ENCODE measurements at regions of chr3 and their contacts with region 1.

Region 1: DNA sequence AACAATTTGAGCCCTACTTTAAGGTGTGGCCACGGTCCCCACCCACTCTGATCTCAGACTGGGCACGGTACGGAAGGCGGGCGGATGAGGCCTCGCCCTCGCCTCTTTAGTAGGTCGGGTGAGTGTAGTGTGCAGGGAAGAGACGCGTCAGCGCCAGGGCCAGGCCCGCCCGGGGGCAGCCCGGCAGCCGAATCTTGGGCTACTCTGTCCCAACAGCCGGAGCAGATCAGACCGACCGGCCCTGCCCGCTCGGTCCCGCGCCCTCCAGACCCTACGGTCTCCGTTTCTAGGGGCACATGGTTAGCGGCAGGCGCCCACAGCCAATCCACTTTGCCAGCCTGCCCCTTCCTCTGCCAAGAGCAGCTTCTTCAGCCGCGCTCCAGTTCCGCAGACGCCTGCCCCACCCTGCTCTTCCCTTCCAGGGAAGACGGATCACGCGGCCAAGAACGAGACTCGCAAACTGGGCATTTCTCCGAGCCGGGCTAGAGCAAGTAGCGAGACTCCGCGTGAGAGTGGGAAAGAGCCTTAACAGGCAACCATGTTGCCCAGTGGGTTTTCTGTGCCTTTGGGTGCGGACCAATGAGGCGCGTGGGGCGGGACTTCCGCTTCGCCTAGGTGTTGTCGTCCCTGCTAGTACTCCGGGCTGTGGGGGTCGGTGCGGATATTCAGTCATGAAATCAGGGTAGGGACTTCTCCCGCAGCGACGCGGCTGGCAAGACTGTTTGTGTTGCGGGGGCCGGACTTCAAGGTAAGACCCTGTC is at the start of gene RNF13:
- DNase-seq: peak; percentile 80 to 94 (median 92)
- ATAC-seq: peak; percentile 96
- H3K4me3 ChIP-seq: peak within 1 kb of the TSS; percentile 95
- H3K4me3 Mint-ChIP-seq: peak within 1 kb of the TSS; percentile 96 to 100 (median 99)
- H3K27ac ChIP-seq: peak within 1 kb of the TSS; percentile 94
- H3K27ac Mint-ChIP-seq: peak within 1 kb of the TSS; percentile 97 to 100 (median 99)
- H3K4me1 ChIP-seq: peaks cover 16 to 34% of the 10 kb centered on the region in 2 donors
- H3K4me1 Mint-ChIP-seq: peaks cover 39 to 54% (median 47%) of the 10 kb centered on the region in 7 donors
- H3K27me3 ChIP-seq: no peaks in the 10 kb centered on the region
- H3K27me3 Mint-ChIP-seq: peaks cover 0 to 14% (median 4%) of the 10 kb centered on the region in 5 donors
- total RNA-seq, gene RNF13: 41.2 to 68.5 (median 66.1) TPM

Region 2: GRCh38 chr3:148991194-148992026 is 821.4 kb before region 1 on chr3 and contains the start of gene GYG1:
- CTCF ChIA-PET with region 1: no interaction called
- POLR2A ChIA-PET with region 1: no interaction called
- intact Hi-C with region 1: loop called (anchors 2 kb)
- DNase-seq: peak; percentile 56 to 78 (median 70)
- ATAC-seq: peak; percentile 91
- H3K4me3 ChIP-seq: peak within 1 kb of the TSS; percentile 77
- H3K4me3 Mint-ChIP-seq: peak within 1 kb of the TSS; percentile 70 to 91 (median 87)
- H3K27ac ChIP-seq: peak within 1 kb of the TSS; percentile 76
- H3K27ac Mint-ChIP-seq: peak within 1 kb of the TSS; percentile 41 to 87 (median 80)
- H3K4me1 ChIP-seq: peaks cover 8 to 16% of the 10 kb centered on the region in 2 donors
- H3K4me1 Mint-ChIP-seq: peaks cover 5 to 41% (median 28%) of the 10 kb centered on the region in 7 donors
- H3K27me3 ChIP-seq: no peaks in the 10 kb centered on the region
- H3K27me3 Mint-ChIP-seq: peaks cover 0 to 3% (median 0%) of the 10 kb centered on the region in 5 donors
- total RNA-seq, gene GYG1: 15.5 to 39.3 (median 16.2) TPM

Region 3: DNA sequence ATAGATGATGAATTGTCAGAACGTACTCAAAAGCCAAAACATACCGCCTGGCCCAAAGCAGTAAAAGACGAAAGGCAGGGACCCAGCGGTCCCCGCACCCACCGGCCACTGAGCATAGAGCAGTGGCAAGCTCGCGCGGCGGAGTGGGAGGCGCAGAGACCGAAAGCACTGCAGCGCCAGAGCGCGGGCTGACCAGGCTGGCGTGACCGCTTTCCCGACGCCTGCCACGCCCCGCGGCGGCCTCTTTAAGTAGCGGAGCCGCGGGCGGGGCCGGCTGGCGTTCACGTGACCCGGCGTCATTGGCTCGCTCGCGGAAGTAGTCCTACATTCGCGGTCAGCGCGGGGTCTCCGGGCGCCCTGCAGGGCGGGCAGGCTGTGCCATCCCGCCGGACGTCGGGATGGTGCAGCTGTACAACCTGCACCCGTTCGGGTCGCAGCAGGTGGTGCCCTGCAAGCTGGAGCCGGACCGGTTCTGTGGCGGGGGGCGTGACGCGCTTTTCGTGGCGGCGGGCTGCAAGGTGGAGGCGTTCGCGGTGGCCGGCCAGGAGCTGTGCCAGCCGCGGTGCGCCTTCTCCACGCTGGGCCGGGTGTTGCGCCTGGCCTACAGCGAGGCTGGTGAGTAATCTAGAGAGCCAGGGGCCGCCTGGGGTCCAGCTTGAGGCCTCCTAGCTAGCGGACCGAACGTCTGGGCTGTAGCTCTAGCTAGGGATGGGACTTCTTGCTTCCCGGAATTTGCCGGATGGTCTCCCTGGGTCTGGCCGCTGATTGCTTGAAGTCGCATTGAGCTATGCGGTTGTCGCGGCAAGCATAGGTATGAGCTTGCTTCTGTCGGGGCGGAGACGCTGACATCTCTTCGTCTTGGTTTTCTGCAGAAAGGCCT is 683.2 kb before region 1 on chr3 and contains the start of gene HPS3:
- CTCF ChIA-PET with region 1: no interaction called
- POLR2A ChIA-PET with region 1: no interaction called
- intact Hi-C with region 1: loop called (anchors 2 kb)
- DNase-seq: peak; percentile 62 to 87 (median 71)
- ATAC-seq: peak; percentile 94
- H3K4me3 ChIP-seq: peak within 1 kb of the TSS; percentile 96
- H3K4me3 Mint-ChIP-seq: peak within 1 kb of the TSS; percentile 92 to 99 (median 96)
- H3K27ac ChIP-seq: peak within 1 kb of the TSS; percentile 70
- H3K27ac Mint-ChIP-seq: peak within 1 kb of the TSS; percentile 84 to 96 (median 90)
- H3K4me1 ChIP-seq: peaks cover 25 to 27% of the 10 kb centered on the region in 2 donors
- H3K4me1 Mint-ChIP-seq: peaks cover 20 to 53% (median 47%) of the 10 kb centered on the region in 7 donors
- H3K27me3 ChIP-seq: no peaks in the 10 kb centered on the region
- H3K27me3 Mint-ChIP-seq: peaks cover 0 to 24% (median 8%) of the 10 kb centered on the region in 5 donors
- total RNA-seq, gene HPS3: 13.6 to 25.8 (median 23.4) TPM

Region 4: DNA sequence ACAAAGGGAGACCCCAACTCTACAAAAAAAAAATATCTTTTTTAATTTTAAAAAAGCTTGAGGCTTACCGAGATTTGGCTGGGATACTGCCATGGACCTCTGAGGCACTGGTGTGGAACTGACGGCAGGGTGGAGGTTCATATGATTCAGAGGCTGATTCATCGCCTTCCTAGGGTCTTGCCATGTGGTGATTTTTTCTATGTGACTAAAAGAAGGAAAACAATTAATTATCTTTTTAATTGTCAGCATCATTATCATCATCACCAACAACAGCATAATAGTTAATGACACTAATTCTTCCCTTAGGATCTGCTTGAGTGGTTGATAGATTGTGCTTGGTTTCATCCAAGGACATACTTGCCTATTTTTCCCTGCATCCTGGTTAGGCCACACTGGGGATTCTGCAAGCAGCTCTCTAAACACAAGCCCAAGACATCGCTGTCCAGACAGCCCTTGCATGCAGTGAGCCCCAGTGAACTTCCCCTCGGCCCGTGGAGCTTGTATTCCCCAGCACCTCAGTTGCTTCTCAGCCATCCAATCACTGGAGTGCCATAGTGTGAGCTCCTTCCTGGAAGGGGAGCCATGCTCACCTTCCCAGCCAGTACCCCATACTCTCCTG is 239.9 kb before region 1 on chr3:
- CTCF ChIA-PET with region 1: no interaction called
- POLR2A ChIA-PET with region 1: no interaction called
- intact Hi-C with region 1: loop called in 1 of 2 experiments (anchors 2 kb)
- DNase-seq: no peak
- ATAC-seq: no peak
- H3K4me3 ChIP-seq: no peak overlapping the region
- H3K4me3 Mint-ChIP-seq: no peak overlapping the region
- H3K27ac ChIP-seq: no peak overlapping the region
- H3K27ac Mint-ChIP-seq: peak overlapping the region in 1 of 9 donors; percentile 38
- H3K4me1 ChIP-seq: no peaks in the 10 kb centered on the region
- H3K4me1 Mint-ChIP-seq: peaks cover 0 to 27% (median 0%) of the 10 kb centered on the region in 7 donors
- H3K27me3 ChIP-seq: no peaks in the 10 kb centered on the region
- H3K27me3 Mint-ChIP-seq: peaks cover 0 to 6% (median 0%) of the 10 kb centered on the region in 5 donors

Region 5: GRCh38 chr3:149765762-149766334 is 46.9 kb before region 1 on chr3:
- CTCF ChIA-PET with region 1: interaction called, 7 read pairs
- POLR2A ChIA-PET with region 1: interaction called, 3 read pairs
- intact Hi-C with region 1: loop called (anchors 5 kb)
- DNase-seq: no peak
- ATAC-seq: no peak
- H3K4me3 ChIP-seq: no peak overlapping the region
- H3K4me3 Mint-ChIP-seq: no peak overlapping the region
- H3K27ac ChIP-seq: no peak overlapping the region
- H3K27ac Mint-ChIP-seq: no peak overlapping the region
- H3K4me1 ChIP-seq: no peaks in the 10 kb centered on the region
- H3K4me1 Mint-ChIP-seq: peaks cover 0 to 2% (median 0%) of the 10 kb centered on the region in 7 donors
- H3K27me3 ChIP-seq: no peaks in the 10 kb centered on the region
- H3K27me3 Mint-ChIP-seq: peaks cover 8 to 30% (median 16%) of the 10 kb centered on the region in 5 donors

Region 6: DNA sequence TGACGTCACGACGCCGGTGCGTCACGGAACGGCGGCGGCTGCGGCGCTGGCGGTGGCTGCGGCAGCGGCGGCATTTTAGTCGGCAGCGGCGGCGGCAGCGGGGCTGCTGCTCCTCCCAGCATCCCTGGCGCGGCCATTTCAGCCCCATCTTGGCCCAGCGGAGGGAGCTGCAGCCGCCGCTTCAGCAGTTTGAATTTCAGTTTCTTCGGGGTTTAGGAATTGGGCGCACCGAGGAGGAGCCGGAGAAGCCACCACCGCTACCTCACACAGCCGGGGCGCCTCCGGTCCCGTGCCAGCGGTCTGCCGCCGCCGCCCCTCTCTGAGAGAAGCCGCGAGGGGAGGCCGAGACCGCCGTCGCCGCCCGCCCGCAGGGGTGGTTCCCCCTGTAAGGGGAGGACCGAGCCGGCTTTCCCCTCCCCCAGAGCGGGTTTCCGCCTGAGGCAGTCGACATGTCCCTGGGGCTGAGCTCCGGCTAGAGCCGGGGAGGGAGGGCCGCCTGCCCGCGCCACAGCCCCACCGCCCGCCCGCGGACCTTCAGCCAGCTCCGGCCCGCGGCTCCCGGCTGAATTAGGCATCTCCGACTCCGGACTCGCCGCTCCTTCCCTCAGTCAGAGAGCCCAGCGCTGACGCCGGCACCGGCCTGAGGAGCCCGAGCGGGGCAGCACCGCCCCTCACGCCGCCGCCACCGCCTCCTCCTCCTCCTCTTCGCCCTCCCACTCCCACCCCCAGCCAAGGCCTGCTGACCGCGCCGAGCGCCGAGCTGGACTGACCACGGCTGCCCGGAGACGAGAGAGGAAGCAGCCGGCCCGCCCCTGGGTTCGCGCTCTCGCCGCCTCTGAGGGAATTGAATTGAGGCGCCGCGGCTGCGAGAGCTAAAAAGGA is 595.7 kb after region 1 on chr3 and contains the start of gene TSC22D2:
- CTCF ChIA-PET with region 1: no interaction called
- POLR2A ChIA-PET with region 1: interaction called, 5 read pairs
- intact Hi-C with region 1: loop called (anchors 1 to 2 kb)
- DNase-seq: peak; percentile 94 to 99 (median 98)
- ATAC-seq: peak; percentile 79
- H3K4me3 ChIP-seq: peak within 1 kb of the TSS; percentile 96
- H3K4me3 Mint-ChIP-seq: peak within 1 kb of the TSS; percentile 88 to 98 (median 91)
- H3K27ac ChIP-seq: peak within 1 kb of the TSS; percentile 98
- H3K27ac Mint-ChIP-seq: peak within 1 kb of the TSS; percentile 89 to 100 (median 98)
- H3K4me1 ChIP-seq: peaks cover 7 to 8% of the 10 kb centered on the region in 2 donors
- H3K4me1 Mint-ChIP-seq: peaks cover 25 to 41% (median 39%) of the 10 kb centered on the region in 7 donors
- H3K27me3 ChIP-seq: no peaks in the 10 kb centered on the region
- H3K27me3 Mint-ChIP-seq: peaks cover 0 to 13% (median 0%) of the 10 kb centered on the region in 5 donors
- total RNA-seq, gene TSC22D2: 17.9 to 42.1 (median 27.3) TPM

Region 7: DNA sequence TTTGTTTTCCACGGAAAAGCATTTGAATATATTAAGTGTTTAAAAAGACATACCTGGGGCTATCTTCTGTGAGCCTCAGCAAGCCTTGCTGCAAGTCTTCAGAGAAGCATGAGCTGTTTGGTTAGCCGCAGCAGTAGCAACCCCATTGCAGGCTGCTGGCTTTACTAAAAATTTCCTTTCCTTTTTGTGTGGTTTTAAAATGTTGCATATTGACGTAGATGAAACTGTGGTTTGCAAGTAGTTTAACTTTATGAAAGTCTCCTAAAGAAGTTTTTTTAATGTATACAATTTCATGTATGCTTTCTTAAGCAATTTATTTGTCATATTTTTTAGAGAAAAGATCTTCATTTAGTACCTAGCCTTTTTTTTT is 1390.2 kb after region 1 on chr3 and contains the start of gene GPR171:
- CTCF ChIA-PET with region 1: no interaction called
- POLR2A ChIA-PET with region 1: no interaction called
- intact Hi-C with region 1: loop called in 1 of 2 experiments (anchors 10 kb)
- DNase-seq: peak in 8 of 9 donors; percentile 62 to 88 (median 82)
- ATAC-seq: peak; percentile 95
- H3K4me3 ChIP-seq: peak within 1 kb of the TSS; percentile 79
- H3K4me3 Mint-ChIP-seq: peak within 1 kb of the TSS; percentile 72 to 94 (median 84)
- H3K27ac ChIP-seq: peak within 1 kb of the TSS; percentile 75
- H3K27ac Mint-ChIP-seq: peak within 1 kb of the TSS; percentile 76 to 98 (median 94)
- H3K4me1 ChIP-seq: peaks cover 45 to 57% of the 10 kb centered on the region in 2 donors
- H3K4me1 Mint-ChIP-seq: peaks cover 34 to 82% (median 71%) of the 10 kb centered on the region in 7 donors
- H3K27me3 ChIP-seq: no peaks in the 10 kb centered on the region
- H3K27me3 Mint-ChIP-seq: no peaks in the 10 kb centered on the region
- total RNA-seq, gene GPR171: 16.0 to 251 (median 63.4) TPM